Activated naive CD4-positive, alpha-beta T cell treated with anti-CD3 and anti-CD28 coated beads, Interleukin-2, amount 10 ng/mL, durations not matched to agents 7 days and 5 days (primary cell): ENCODE measurements at regions of chr4 and their contacts with region 1.

Region 1: GRCh38 chr4:128191115-128191781 is 96.4 kb downstream of the PGRMC2 start:
- DNase-seq: peak; percentile 77
- H3K4me3 Mint-ChIP-seq: no peak overlapping the region
- H3K27ac Mint-ChIP-seq: no peak overlapping the region
- H3K4me1 Mint-ChIP-seq: peaks cover 10% of the 10 kb centered on the region
- H3K27me3 Mint-ChIP-seq: no peaks in the 10 kb centered on the region

Region 2: GRCh38 chr4:128220286-128221235 is 29.3 kb after region 1 on chr4:
- CTCF ChIA-PET with region 1: interaction called, 14 read pairs
- DNase-seq: no peak
- H3K4me3 Mint-ChIP-seq: no peak overlapping the region
- H3K27ac Mint-ChIP-seq: no peak overlapping the region
- H3K4me1 Mint-ChIP-seq: no peaks in the 10 kb centered on the region
- H3K27me3 Mint-ChIP-seq: no peaks in the 10 kb centered on the region

Region 3: GRCh38 chr4:128310266-128310697 is 119.0 kb after region 1 on chr4:
- CTCF ChIA-PET with region 1: no interaction called
- DNase-seq: no peak
- H3K4me3 Mint-ChIP-seq: no peak overlapping the region
- H3K27ac Mint-ChIP-seq: no peak overlapping the region
- H3K4me1 Mint-ChIP-seq: no peaks in the 10 kb centered on the region
- H3K27me3 Mint-ChIP-seq: no peaks in the 10 kb centered on the region